ENCODE measurements at regions of chr12 and their contacts with region 1.

Region 1: GRCh38 chr12:32312049-32312670 is 87.2 kb upstream of the FGD4 start:
- DNase-seq: peak; percentile 45 to 80
- ATAC-seq: peak in 1 of 2 experiments; percentile 84; a peak in 4 of 6 replicates
- H3K4me3 ChIP-seq: no peak overlapping the region
- H3K27ac ChIP-seq: no peak overlapping the region
- H3K4me1 ChIP-seq: no peaks in the 10 kb centered on the region; the same call in 2 of the 3 replicates
- CTCF ChIP-seq: peak; percentile 81
- EP300 ChIP-seq: no peak
- POLR2A ChIP-seq: no peak
- RAD21 ChIP-seq: peak; percentile 67

Region 2: GRCh38 chr12:31647086-31647491 is 665.1 kb before region 1 on chr12:
- CTCF ChIA-PET with region 1: interaction called, 81 read pairs
- POLR2A ChIA-PET with region 1: no interaction called
- DNase-seq: no peak
- ATAC-seq: no peak
- H3K4me3 ChIP-seq: no peak overlapping the region
- H3K27ac ChIP-seq: peak overlapping the region in 1 of 2 experiments; percentile 20; a peak in 1 of 6 replicates
- H3K4me1 ChIP-seq: peaks cover 23% of the 10 kb centered on the region; the same call in 2 of the 3 replicates
- CTCF ChIP-seq: no peak
- EP300 ChIP-seq: no peak
- POLR2A ChIP-seq: no peak
- RAD21 ChIP-seq: no peak

Region 3: GRCh38 chr12:31682136-31682962 is 629.8 kb before region 1 on chr12:
- CTCF ChIA-PET with region 1: interaction called, 25 read pairs
- POLR2A ChIA-PET with region 1: no interaction called
- DNase-seq: peak; percentile 63 to 95
- ATAC-seq: peak; percentile 98
- H3K4me3 ChIP-seq: peak overlapping the region; percentile 16; the same call in 1 of the 3 replicates
- H3K27ac ChIP-seq: peak overlapping the region; percentile 46 to 70; a peak in 5 of 6 replicates
- H3K4me1 ChIP-seq: 0 out of 3 replicates have a peak, but pooled peaks cover 6% of the 10 kb centered on the region
- CTCF ChIP-seq: peak; percentile 85
- EP300 ChIP-seq: no peak
- POLR2A ChIP-seq: no peak
- RAD21 ChIP-seq: peak; percentile 98 to 99

Region 4: GRCh38 chr12:32106517-32107358 is 205.4 kb before region 1 on chr12 and contains the start of gene BICD1:
- CTCF ChIA-PET with region 1: interaction called, 13 read pairs
- POLR2A ChIA-PET with region 1: no interaction called
- DNase-seq: peak; percentile 75 to 89
- ATAC-seq: peak; percentile 95 to 96
- H3K4me3 ChIP-seq: peak within 1 kb of the TSS; percentile 94
- H3K27ac ChIP-seq: peak within 1 kb of the TSS; percentile 97 to 98
- H3K4me1 ChIP-seq: peaks cover 28% of the 10 kb centered on the region
- CTCF ChIP-seq: peak; percentile 57
- EP300 ChIP-seq: no peak; a peak in 1 of 5 replicates
- POLR2A ChIP-seq: peak; percentile 91
- RAD21 ChIP-seq: peak; percentile 7 to 62; a peak in 3 of 5 replicates
- polyA plus RNA-seq, gene BICD1: 21.7 and 24.3 TPM in 2 replicates

Measured in A549 (cell line).